ENCODE measurements at regions of chr6 and their contacts with region 1.

Region 1: GRCh38 chr6:35468181-35468979 is at the start of gene RPL10A:
- DNase-seq: peak; percentile 93 to 99 (median 96)
- ATAC-seq: peak; percentile 83 to 86
- H3K4me3 Mint-ChIP-seq: peak within 1 kb of the TSS; percentile 91 to 99 (median 98)
- H3K27ac Mint-ChIP-seq: peak within 1 kb of the TSS; percentile 90 to 99 (median 99)
- H3K4me1 Mint-ChIP-seq: peaks cover 18 to 43% (median 39%) of the 10 kb centered on the region in 4 donors
- H3K27me3 Mint-ChIP-seq: no peaks in the 10 kb centered on the region
- polyA plus RNA-seq, gene RPL10A: 1,376 to 1,445 (median 1,413) TPM

Region 2: DNA sequence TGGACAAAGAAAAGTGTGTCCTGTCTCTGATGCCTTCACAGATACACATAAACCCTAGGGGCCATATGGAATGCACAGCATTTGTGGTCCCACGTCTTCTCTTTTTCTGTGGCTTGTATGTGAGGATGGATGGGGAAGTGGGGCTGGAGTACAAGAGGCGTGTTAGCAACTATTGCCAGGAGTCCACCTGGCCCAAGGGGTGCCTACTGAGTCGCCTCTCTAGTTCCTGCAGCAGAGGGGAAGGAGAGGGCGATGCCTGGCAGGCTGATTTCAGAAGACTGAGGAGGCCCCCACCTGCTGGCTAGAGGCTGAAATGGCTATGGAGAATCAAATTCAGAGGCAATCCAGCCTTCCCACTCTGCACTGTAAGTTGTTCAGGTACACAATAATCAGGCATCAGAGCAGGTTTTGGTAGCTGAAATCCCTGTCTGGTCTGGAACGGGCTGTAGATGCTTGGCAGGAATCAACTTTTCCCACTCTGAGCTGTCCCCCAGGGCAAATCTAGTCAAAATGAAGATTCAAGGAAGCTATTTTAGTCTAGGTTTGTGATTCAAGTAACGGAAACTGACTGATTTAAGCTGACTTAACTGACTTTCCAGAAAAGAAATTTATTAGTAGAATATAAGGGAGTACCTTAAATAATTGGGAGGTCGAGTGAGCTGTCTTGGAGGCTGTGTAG is 140.9 kb before region 1 on chr6:
- POLR2A ChIA-PET with region 1: interaction called, 12 read pairs
- DNase-seq: peak; percentile 58 to 88 (median 76)
- ATAC-seq: peak; percentile 75 to 84
- H3K4me3 Mint-ChIP-seq: peak overlapping the region in 4 of 10 donors; percentile 24 to 47 (median 34)
- H3K27ac Mint-ChIP-seq: peak overlapping the region; percentile 14 to 94 (median 86)
- H3K4me1 Mint-ChIP-seq: peaks cover 9 to 30% (median 26%) of the 10 kb centered on the region in 4 donors
- H3K27me3 Mint-ChIP-seq: no peaks in the 10 kb centered on the region

Region 3: GRCh38 chr6:35452186-35453090 is 15.9 kb before region 1 on chr6 and contains the start of gene FANCE:
- POLR2A ChIA-PET with region 1: interaction called, 48 read pairs
- DNase-seq: peak; percentile 59 to 91 (median 77)
- ATAC-seq: peak; percentile 74 to 77
- H3K4me3 Mint-ChIP-seq: peak within 1 kb of the TSS; percentile 82 to 92 (median 86)
- H3K27ac Mint-ChIP-seq: peak within 1 kb of the TSS; percentile 51 to 93 (median 82)
- H3K4me1 Mint-ChIP-seq: peaks cover 14 to 54% (median 40%) of the 10 kb centered on the region in 4 donors
- H3K27me3 Mint-ChIP-seq: no peaks in the 10 kb centered on the region
- polyA plus RNA-seq, gene FANCE: 3.2 to 5.5 (median 3.3) TPM

Region 4: GRCh38 chr6:35496841-35497570 is 28.6 kb after region 1 on chr6 and contains the start of gene TEAD3:
- POLR2A ChIA-PET with region 1: interaction called, 15 read pairs
- DNase-seq: peak in 9 of 10 donors; percentile 10 to 57 (median 47)
- ATAC-seq: peak; percentile 65 to 77
- H3K4me3 Mint-ChIP-seq: peak within 1 kb of the TSS; percentile 70 to 89 (median 80)
- H3K27ac Mint-ChIP-seq: peak within 1 kb of the TSS in 2 of 10 donors; percentile 20 to 79
- H3K4me1 Mint-ChIP-seq: peaks cover 14 to 32% (median 21%) of the 10 kb centered on the region in 4 donors
- H3K27me3 Mint-ChIP-seq: peaks cover 10 to 34% (median 15%) of the 10 kb centered on the region in 5 donors
- polyA plus RNA-seq, gene TEAD3: 0.05 to 0.16 (median 0.15) TPM

Region 5: GRCh38 chr6:35590622-35591066 is 122.3 kb after region 1 on chr6:
- POLR2A ChIA-PET with region 1: interaction called, 10 read pairs
- DNase-seq: no peak
- ATAC-seq: no peak
- H3K4me3 Mint-ChIP-seq: peak overlapping the region in 9 of 10 donors; percentile 22 to 69 (median 44)
- H3K27ac Mint-ChIP-seq: peak overlapping the region; percentile 78 to 96 (median 94)
- H3K4me1 Mint-ChIP-seq: peaks cover 32 to 96% (median 91%) of the 10 kb centered on the region in 4 donors
- H3K27me3 Mint-ChIP-seq: no peaks in the 10 kb centered on the region

Measured in naive thymus-derived CD8-positive, alpha-beta T cell (primary cell).